ENCODE measurements at regions of chr12 and their contacts with region 1.

Region 1: GRCh38 chr12:5083955-5084849 is 40.5 kb downstream of the KCNA5 start:
- DNase-seq: peak; percentile 73
- CTCF ChIP-seq: peak; percentile 75

Region 2: DNA sequence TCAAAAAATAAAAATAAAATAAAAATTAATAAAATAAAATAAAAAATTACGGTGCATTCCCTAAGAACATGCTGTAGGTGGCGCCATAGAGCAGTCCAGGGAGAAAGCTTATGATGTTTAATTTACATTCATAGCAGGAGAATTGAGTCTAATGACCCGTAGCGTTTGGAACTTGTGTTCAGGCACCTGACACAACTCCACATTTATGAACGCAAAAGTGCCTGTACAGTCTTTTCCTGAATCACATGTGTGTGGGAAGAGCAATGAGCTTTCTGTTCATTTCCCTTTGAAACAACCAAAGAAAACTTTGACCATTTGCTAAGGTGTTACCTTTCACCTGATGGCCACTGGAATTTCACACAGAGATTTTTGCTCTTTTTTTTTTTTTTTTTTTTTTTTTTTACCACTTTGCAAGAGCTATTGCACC is 235.1 kb before region 1 on chr12:
- CTCF ChIA-PET with region 1: interaction called, 69 read pairs
- POLR2A ChIA-PET with region 1: no interaction called
- DNase-seq: peak; percentile 54
- CTCF ChIP-seq: peak; percentile 50

Region 3: GRCh38 chr12:5051334-5051733 is 32.9 kb before region 1 on chr12:
- CTCF ChIA-PET with region 1: interaction called, 27 read pairs
- POLR2A ChIA-PET with region 1: no interaction called
- DNase-seq: no peak
- CTCF ChIP-seq: no peak

Region 4: GRCh38 chr12:5066251-5066650 is 18.0 kb before region 1 on chr12:
- CTCF ChIA-PET with region 1: interaction called, 70 read pairs
- POLR2A ChIA-PET with region 1: no interaction called
- DNase-seq: no peak
- CTCF ChIP-seq: no peak

Region 5: GRCh38 chr12:5073853-5074252 is 10.3 kb before region 1 on chr12:
- CTCF ChIA-PET with region 1: interaction called, 70 read pairs
- POLR2A ChIA-PET with region 1: no interaction called
- DNase-seq: no peak
- CTCF ChIP-seq: no peak

Region 6: GRCh38 chr12:5244513-5244972 is 160.3 kb after region 1 on chr12:
- CTCF ChIA-PET with region 1: no interaction called
- POLR2A ChIA-PET with region 1: no interaction called
- DNase-seq: no peak
- CTCF ChIP-seq: no peak